Dorsolateral prefrontal cortex (tissue), 120 donors: ENCODE measurements at regions of chr14 and their contacts with region 1.

Region 1: GRCh38 chr14:93115069-93115820 is 480 bp downstream of the ITPK1 start:
- DNase-seq: peak; percentile 62 to 94 (median 84)
- H3K4me3 ChIP-seq: peak overlapping the region; percentile 65 to 97 (median 89)
- H3K27ac ChIP-seq: peak overlapping the region; percentile 80 to 99 (median 95)
- H3K27me3 ChIP-seq: no peaks in the 10 kb centered on the region
- CTCF ChIP-seq: peak in 25 of 56 donors; percentile 2 to 57 (median 21)

Region 2: DNA sequence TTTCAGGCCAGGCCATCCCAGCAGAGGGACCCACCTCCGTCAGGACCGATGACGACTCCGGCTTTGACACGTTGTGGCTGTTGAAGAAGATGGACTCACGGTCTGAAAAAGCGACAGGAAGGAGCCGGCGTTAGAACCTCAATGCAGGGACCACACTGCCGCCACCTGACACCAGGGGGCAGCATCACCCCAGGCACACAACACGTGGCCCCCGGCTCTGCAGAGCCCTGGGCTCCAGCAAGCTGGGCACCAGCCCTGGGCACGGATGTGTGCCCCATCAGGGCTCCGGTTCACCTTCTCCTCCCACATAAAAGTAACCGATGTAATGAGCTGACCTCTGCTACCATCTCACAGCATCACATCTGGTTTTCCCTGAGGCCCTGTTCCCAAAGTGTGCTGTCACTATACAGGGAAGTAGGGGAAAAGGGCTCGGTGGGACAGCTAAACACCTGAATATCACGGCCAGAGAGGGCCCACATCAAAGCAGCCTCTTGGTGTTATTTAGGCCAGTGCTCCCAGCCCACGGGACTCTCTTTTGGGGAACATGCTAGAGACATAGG is 163.3 kb before region 1 on chr14:
- intact Hi-C with region 1: loop called (anchors 1 to 2 kb)
- DNase-seq: peak; percentile 82 to 93 (median 88)
- H3K4me3 ChIP-seq: peak overlapping the region in 5 of 59 donors; percentile 4 to 18 (median 11)
- H3K27ac ChIP-seq: peak overlapping the region; percentile 10 to 99 (median 93)
- H3K27me3 ChIP-seq: no peaks in the 10 kb centered on the region
- CTCF ChIP-seq: peak; percentile 82 to 100 (median 98)

Region 3: GRCh38 chr14:93007225-93007997 is 107.8 kb before region 1 on chr14:
- intact Hi-C with region 1: loop called in 1 of 2 experiments (anchors 1 kb)
- DNase-seq: peak in 5 of 10 donors; percentile 54 to 78 (median 70)
- H3K4me3 ChIP-seq: no peak overlapping the region
- H3K27ac ChIP-seq: peak overlapping the region; percentile 36 to 98 (median 89)
- H3K27me3 ChIP-seq: no peaks in the 10 kb centered on the region
- CTCF ChIP-seq: no peak

Region 4: DNA sequence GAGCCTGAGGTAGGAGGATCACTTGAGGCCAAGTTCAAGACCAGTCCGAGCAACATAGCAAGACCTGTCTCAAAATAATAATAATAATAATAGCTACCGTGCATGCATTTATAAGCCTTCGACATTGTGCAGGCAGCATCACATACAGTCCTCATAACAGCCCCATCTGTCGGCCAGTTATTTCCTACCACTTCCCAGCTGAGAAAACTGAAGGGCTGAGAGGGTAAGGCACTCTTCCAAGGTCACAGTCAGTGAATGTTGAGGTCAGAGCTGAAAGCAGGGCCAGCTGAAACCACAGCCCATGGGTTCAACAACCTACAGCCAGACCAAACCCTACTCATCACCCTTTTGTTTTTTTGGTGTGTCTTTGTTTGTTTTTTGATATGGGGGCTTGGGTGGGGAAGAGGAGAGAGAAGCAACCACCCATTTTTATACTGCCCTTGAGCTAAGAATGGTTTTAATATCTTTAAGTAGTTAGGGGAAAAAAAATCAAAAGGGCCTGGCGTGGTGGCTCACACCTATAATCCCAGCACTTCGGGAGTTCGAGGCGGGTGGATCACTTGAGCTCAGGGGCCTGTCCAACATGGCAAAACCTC is 17.3 kb after region 1 on chr14:
- intact Hi-C with region 1: loop called (anchors 2 kb)
- DNase-seq: peak in 4 of 10 donors; percentile 21 to 47 (median 36)
- H3K4me3 ChIP-seq: no peak overlapping the region
- H3K27ac ChIP-seq: no peak overlapping the region
- H3K27me3 ChIP-seq: no peaks in the 10 kb centered on the region
- CTCF ChIP-seq: peak in 53 of 56 donors; percentile 14 to 71 (median 51)

Region 5: GRCh38 chr14:93184388-93185353 is 69.4 kb after region 1 on chr14 and contains the starts of genes LYSET and MOAP1:
- intact Hi-C with region 1: loop called in 1 of 2 experiments (anchors 5 kb)
- DNase-seq: peak; percentile 74 to 92 (median 86)
- H3K4me3 ChIP-seq: peak within 1 kb of the TSS; percentile 72 to 100 (median 96)
- H3K27ac ChIP-seq: peak within 1 kb of the TSS; percentile 64 to 99 (median 96)
- H3K27me3 ChIP-seq: no peaks in the 10 kb centered on the region
- CTCF ChIP-seq: peak in 28 of 56 donors; percentile 2 to 49 (median 26)
- total RNA-seq, gene LYSET: 7.5 to 23.0 (median 15.3) TPM
- total RNA-seq, gene MOAP1: 71.5 to 285 (median 191) TPM